Head of caudate nucleus (tissue), 42 donors: ENCODE measurements at regions of chr3 and their contacts with region 1.

Region 1: GRCh38 chr3:170357176-170357919 is at the start of gene SKIL:
- DNase-seq: peak; percentile 93 to 98 (median 96)

Region 2: DNA sequence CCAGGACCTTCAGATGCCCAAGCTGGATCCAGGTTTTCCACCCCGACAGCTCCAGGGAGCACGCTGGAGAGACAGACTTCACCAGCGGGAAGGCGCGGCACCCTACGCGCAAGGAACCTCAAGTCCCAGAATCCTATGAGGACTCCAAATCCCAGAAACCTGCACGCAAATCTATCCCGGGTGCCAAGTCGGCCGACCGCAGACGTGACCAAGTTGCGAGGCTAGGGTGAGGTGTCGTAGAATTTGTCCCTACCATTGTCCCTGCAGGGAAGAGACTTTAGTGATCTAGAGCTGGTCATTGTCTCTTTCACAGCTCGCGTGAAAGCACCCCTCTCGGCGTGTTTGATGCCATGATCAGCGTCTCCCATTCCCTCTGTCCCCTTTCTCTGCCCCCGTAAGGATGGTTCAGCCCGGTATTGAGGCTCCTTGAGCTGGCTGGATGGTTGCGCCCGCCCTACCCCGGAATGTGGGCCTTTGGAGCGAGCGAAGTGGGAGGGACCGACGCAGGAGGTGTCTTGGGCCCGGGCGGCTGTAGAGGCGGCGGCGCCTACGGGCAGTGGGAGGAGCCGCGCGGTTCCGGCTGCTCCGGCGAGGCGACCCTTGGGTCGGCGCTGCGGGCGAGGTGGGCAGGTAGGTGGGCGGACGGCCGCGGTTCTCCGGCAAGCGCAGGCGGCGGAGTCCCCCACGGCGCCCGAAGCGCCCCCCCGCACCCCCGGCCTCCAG is 135.3 kb before region 1 on chr3 and contains the start of gene PRKCI:
- intact Hi-C with region 1: loop called (anchors 10 kb)
- DNase-seq: peak; percentile 89 to 98 (median 96)

Region 3: GRCh38 chr3:170307671-170308403 is 49.5 kb before region 1 on chr3:
- intact Hi-C with region 1: loop called (anchors 2 kb)
- DNase-seq: peak in 1 of 42 donors; percentile 9

Region 4: GRCh38 chr3:170321321-170322034 is 35.9 kb before region 1 on chr3:
- intact Hi-C with region 1: no loop called
- DNase-seq: peak in 13 of 42 donors; percentile 14 to 53 (median 31)